Activated naive CD4-positive, alpha-beta T cell treated with anti-CD3 and anti-CD28 coated beads for 36 hours (primary cell): ENCODE measurements at regions of chr7 and their contacts with region 1.

Region 1: GRCh38 chr7:140619176-140619575 is 21.4 kb downstream of the DENND2A start:
- DNase-seq: no peak
- H3K4me3 Mint-ChIP-seq: no peak overlapping the region
- H3K27ac Mint-ChIP-seq: no peak overlapping the region
- H3K4me1 Mint-ChIP-seq: no peaks in the 10 kb centered on the region
- H3K27me3 Mint-ChIP-seq: no peaks in the 10 kb centered on the region

Region 2: DNA sequence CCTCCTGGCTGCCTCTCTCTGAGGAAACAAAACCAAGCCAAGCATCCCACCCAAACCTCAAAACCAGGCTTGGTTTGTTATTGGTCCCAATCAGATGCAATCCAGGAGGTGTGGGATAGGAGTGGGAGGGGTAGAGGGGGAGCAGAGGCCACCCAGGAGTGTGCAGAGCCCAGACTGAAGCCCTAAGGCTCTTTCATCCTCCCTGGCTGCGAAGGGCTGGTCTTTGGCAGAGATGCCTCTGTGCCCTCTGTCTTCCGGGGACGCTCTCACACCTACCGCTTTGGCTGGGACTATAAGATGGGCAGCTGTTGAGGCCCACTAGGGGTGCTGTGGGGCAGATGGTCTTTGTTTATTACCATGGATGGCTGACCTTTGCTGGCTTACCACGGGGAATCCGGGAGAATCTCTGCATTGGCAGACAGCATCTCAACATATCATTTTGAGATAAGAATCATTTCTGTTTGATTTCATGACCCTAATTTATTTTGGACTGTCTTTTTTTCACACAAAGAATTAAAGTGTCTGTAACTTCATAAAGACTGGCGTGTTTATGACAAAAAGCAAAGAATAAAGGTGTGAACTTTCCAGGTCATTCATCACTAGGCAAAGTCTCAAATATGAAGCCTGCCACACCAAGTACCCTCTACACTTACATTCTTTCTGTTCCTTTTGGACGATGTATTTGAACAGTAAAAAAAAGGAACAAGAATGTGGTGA is 27.9 kb after region 1 on chr7:
- CTCF ChIA-PET with region 1: interaction called, 11 read pairs
- intact Hi-C with region 1: no loop called
- DNase-seq: peak; percentile 56
- H3K4me3 Mint-ChIP-seq: no peak overlapping the region
- H3K27ac Mint-ChIP-seq: no peak overlapping the region
- H3K4me1 Mint-ChIP-seq: no peaks in the 10 kb centered on the region
- H3K27me3 Mint-ChIP-seq: peaks cover 11% of the 10 kb centered on the region